Heart left ventricle (tissue), 16 donors: ENCODE measurements at regions of chr22 and their contacts with region 1.

Region 1: GRCh38 chr22:25696763-25697667 is 45.0 kb upstream of the MYO18B start:
- DNase-seq: no peak
- ATAC-seq: no peak
- H3K4me3 ChIP-seq: no peak overlapping the region
- H3K27ac ChIP-seq: no peak overlapping the region
- H3K4me1 ChIP-seq: peaks cover 0 to 28% (median 12%) of the 10 kb centered on the region in 12 donors
- H3K27me3 ChIP-seq: no peaks in the 10 kb centered on the region
- CTCF ChIP-seq: no peak
- POLR2A ChIP-seq: no peak

Region 2: DNA sequence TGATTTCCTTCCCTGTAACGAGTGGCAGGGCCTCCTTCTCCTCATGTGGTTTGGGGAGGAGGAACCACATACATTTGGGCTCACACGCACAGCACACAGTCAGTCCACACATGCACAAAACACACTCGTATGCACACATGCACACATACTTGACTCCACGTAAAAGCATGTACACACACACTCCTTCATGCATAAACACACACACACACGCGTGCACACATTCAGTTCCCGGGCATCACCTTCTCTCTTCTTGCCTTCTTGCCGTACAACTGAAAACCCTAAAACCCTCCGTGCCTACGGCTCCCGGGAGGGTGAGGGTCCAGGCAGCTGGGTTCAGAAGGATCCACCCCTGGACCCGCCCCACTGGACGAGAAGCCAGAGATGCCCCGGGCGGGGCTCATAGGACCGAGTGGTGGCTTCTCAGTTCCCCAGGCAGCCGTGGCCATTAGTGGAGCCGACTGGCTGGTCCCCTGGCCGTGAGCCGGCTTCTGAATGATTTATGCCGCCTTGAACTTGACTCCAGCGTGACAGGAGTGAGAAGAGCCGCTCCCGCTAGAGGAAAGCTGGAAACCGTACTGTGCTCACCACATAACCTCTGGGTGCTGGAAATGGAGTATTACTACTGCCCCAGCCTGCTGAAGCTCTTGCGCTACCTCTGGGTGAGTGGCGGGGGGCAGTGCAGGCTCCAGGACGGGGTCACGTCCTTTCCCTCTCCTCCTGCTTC is 627.1 kb before region 1 on chr22:
- intact Hi-C with region 1: no loop called
- DNase-seq: no peak
- ATAC-seq: no peak
- H3K4me3 ChIP-seq: peak overlapping the region in 5 of 12 donors; percentile 23 to 44 (median 36)
- H3K27ac ChIP-seq: peak overlapping the region in 3 of 12 donors; percentile 7 to 53 (median 29)
- H3K4me1 ChIP-seq: peaks cover 0 to 24% (median 0%) of the 10 kb centered on the region in 12 donors
- H3K27me3 ChIP-seq: peaks cover 0 to 5% (median 0%) of the 10 kb centered on the region in 9 donors
- CTCF ChIP-seq: no peak
- POLR2A ChIP-seq: no peak

Region 3: DNA sequence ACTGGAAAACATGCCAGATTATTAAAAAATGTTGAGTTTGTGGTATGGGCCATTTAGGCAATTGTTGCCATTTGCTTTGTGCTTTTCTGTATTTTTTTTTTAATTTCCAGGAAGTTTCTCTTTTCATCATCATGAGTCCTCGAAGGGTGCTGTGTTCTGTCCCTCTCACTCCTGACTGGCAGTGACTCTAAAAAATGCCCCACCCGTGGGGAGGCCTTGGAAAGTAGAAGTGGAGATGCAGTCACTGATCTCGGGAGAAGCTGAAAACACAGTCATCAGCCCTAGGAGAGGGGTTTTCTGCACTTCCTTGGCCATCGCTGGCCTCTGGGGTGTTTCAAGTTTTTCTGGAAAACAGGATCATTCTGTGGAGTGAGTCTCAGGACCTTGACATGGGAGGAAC is 231.1 kb before region 1 on chr22:
- intact Hi-C with region 1: loop called in 9 of 10 experiments (anchors 1 to 5 kb)
- DNase-seq: no peak
- ATAC-seq: no peak
- H3K4me3 ChIP-seq: no peak overlapping the region
- H3K27ac ChIP-seq: no peak overlapping the region
- H3K4me1 ChIP-seq: peaks cover 0 to 5% (median 0%) of the 10 kb centered on the region in 12 donors
- H3K27me3 ChIP-seq: no peaks in the 10 kb centered on the region
- CTCF ChIP-seq: no peak
- POLR2A ChIP-seq: no peak

Region 4: GRCh38 chr22:25546751-25547150 is 150.3 kb before region 1 on chr22:
- intact Hi-C with region 1: loop called in 4 of 10 experiments (anchors 2 to 10 kb)
- DNase-seq: no peak
- ATAC-seq: peak in 3 of 4 donors; percentile 13 to 19 (median 16)
- H3K4me3 ChIP-seq: no peak overlapping the region
- H3K27ac ChIP-seq: peak overlapping the region in 1 of 12 donors; percentile 50
- H3K4me1 ChIP-seq: peaks cover 0 to 27% (median 0%) of the 10 kb centered on the region in 12 donors
- H3K27me3 ChIP-seq: no peaks in the 10 kb centered on the region
- CTCF ChIP-seq: no peak
- POLR2A ChIP-seq: no peak

Region 5: GRCh38 chr22:25564320-25564978 is 132.6 kb before region 1 on chr22 and contains the start of gene GRK3:
- intact Hi-C with region 1: loop called in 2 of 10 experiments (anchors 10 kb)
- DNase-seq: peak; percentile 74 to 83 (median 78)
- ATAC-seq: peak; percentile 81 to 88 (median 86)
- H3K4me3 ChIP-seq: peak within 1 kb of the TSS; percentile 69 to 96 (median 86)
- H3K27ac ChIP-seq: peak within 1 kb of the TSS in 10 of 12 donors; percentile 38 to 87 (median 63)
- H3K4me1 ChIP-seq: peaks cover 0 to 53% (median 10%) of the 10 kb centered on the region in 12 donors
- H3K27me3 ChIP-seq: no peaks in the 10 kb centered on the region
- CTCF ChIP-seq: no peak
- POLR2A ChIP-seq: peak in 1 of 2 donors; percentile 31
- total RNA-seq, gene GRK3: 3.6 to 16.2 (median 6.3) TPM

Region 6: DNA sequence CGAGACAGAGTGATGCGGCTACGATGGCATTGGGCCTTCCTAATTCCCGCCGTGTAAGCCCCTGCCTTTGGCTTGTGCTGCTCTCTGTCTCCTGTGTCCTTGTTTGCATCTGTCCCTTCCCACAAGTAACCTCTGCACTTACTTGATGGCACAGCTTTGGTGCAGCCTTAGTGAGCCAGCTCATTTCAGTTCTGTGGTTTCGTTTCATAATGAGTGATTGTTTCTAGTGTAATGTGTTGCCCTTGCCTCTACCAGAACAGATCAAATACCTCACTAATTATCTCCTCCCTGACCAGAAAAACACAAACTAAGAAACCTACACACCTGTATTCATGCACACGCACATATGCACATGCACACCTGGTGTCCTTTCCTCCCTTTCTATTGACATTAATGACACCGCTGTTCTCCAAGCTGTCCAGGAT is 73.7 kb before region 1 on chr22:
- intact Hi-C with region 1: no loop called
- DNase-seq: no peak
- ATAC-seq: no peak
- H3K4me3 ChIP-seq: no peak overlapping the region
- H3K27ac ChIP-seq: no peak overlapping the region
- H3K4me1 ChIP-seq: peaks cover 0 to 15% (median under 1%) of the 10 kb centered on the region in 12 donors
- H3K27me3 ChIP-seq: no peaks in the 10 kb centered on the region
- CTCF ChIP-seq: no peak
- POLR2A ChIP-seq: no peak

Region 7: DNA sequence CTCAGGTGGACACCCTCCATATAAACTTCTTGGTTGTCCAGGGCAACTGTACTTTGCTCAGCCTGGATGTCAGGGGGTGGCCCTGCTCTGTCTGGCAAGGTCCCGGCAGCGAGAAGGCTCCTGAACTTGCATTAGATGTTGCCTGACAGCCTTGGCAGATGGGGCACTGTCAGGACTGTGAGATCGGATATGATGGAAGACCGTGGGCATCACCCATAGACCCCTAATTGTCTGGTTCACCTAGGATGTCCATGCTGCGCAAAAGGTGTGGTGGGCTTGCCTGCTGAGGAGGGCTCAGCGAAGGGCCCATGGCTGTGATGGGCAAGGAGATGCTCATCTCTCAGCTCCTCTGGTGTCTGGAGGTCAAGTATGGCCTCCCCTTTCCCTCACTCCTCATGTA is 107.7 kb after region 1 on chr22:
- intact Hi-C with region 1: no loop called
- DNase-seq: no peak
- ATAC-seq: no peak
- H3K4me3 ChIP-seq: no peak overlapping the region
- H3K27ac ChIP-seq: no peak overlapping the region
- H3K4me1 ChIP-seq: peaks cover 0 to 3% (median 0%) of the 10 kb centered on the region in 12 donors
- H3K27me3 ChIP-seq: no peaks in the 10 kb centered on the region
- CTCF ChIP-seq: no peak
- POLR2A ChIP-seq: no peak